Activated CD4-positive, alpha-beta T cell treated with anti-CD3 and anti-CD28 coated beads for 36 hours (primary cell): ENCODE measurements at regions of chr11 and their contacts with region 1.

Region 1: DNA sequence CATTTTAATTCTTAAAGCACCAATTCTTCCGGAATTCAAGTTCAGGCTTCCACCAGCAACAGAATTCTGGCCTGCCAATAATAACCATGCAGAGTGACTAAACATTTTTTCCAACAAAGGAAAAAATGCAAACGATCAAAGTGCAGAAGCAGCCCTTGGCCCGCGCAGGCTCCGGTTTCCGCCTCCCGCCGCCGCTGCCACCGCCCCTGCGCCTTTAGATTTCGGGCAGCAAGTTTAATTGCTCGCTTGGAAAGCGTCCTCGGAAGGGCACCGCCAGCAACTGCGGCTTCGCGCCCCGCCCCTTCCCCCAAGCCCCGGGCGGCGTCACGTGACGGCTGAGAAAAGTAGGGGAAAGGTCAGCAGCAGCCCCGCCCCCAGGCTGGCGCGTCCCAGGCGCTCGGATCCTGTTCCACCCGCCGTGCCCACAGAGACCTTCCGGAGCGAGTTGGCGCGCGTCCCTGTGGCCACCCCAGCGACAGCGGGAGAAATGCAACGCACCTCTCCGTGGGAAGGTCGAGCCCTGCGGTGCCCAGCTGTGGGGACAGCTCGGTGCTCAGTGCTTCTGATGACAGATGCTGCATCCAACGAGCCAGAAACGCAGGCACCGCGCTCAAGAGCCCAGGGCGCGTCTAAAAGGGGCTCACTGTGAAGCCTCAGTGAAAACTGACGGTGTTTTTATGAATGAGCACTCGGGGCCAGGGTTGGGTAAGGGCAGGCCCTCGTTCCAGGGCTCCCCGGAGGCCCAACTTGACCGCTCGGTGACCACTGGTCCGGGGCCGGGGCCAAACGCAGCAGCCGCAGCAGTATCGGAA is 2.5 kb downstream of the CPT1A start:
- DNase-seq: peak; percentile 97
- ATAC-seq: peak; percentile 57
- H3K4me3 Mint-ChIP-seq: peak overlapping the region; percentile 81
- H3K27ac Mint-ChIP-seq: peak overlapping the region; percentile 86
- H3K4me1 Mint-ChIP-seq: peaks cover 50% of the 10 kb centered on the region
- H3K27me3 Mint-ChIP-seq: no peaks in the 10 kb centered on the region

Region 2: DNA sequence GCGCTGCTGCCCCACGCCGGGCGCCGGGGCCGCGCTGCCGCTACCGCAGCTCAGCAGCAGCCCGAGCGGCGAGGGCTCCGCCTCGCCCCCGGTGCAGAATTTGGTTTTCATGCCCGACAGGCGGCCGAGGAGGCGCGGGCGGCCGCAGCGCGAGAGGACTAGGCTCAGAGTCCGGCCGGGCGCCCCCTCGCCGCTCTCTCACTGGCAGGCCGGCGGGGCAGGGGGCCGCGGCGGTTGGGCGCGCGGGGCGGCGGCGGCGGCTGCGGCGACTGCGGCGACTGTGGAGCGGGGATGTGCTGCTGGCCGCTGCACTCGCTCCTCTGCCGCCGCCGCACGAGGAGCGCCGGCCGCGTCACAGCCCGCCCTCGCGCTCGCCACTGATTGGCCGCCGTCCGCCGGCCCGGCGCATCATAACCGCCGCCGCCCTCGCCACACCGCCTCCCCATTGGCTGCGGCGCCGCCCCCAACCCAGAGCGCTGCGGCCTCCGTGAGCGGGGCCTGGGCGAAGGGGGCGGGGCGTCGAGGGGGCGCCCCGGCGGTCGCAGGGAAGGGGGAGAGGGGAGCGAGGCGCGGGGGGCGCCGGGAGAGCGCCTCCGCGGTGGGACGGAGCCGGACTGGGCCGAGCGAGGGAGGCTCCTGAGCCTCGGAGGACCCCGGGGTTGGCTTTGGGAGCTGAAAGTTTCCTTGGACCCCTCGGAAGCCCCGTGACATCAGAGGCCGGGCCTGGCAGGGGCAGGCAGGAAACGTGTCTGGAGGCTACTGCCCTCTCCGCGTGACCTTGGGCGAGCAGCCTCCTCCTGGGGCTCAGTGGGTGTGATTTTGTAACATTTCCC is 718.0 kb before region 1 on chr11 and contains the start of gene CHKA:
- CTCF ChIA-PET with region 1: no interaction called
- POLR2A ChIA-PET with region 1: no interaction called
- intact Hi-C with region 1: loop called in 1 of 2 experiments (anchors 5 kb)
- DNase-seq: peak; percentile 94
- ATAC-seq: peak; percentile 97
- H3K4me3 Mint-ChIP-seq: peak within 1 kb of the TSS; percentile 71
- H3K27ac Mint-ChIP-seq: peak within 1 kb of the TSS; percentile 68
- H3K4me1 Mint-ChIP-seq: peaks cover 7% of the 10 kb centered on the region
- H3K27me3 Mint-ChIP-seq: no peaks in the 10 kb centered on the region
- total RNA-seq, gene CHKA: 5.5 to 7.5 TPM

Region 3: DNA sequence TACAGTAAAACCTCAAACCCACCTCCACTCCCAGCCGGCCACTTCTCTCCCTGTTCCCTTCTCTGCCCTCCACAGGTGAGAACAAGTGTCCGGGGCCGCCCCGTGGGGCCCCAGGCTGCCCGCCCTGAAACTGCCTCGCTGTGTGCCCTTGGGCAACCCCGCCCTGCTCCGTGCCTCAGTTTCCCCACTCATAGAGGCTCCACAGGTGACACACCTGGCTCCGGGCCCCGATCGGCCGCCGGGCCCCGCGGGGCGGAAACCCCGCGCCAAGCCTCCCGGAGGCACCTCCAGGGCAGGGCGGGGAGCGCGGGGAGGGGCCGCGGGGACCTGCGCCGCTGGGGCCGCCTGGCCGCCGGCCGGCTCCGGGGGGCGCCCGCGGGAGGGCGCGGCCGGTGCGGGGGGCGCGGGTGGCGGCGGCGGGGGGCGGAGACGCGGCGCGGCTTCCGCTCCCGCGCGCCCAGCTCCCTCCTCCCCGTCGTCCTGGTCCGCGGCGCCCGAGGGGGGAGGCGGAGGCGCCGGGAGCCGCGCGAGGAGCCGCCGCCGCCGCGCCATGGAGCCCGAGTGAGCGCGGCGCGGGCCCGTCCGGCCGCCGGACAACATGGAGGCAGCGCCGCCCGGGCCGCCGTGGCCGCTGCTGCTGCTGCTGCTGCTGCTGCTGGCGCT is 527.0 kb before region 1 on chr11 and contains the start of gene LRP5:
- CTCF ChIA-PET with region 1: no interaction called
- POLR2A ChIA-PET with region 1: no interaction called
- intact Hi-C with region 1: loop called in 1 of 2 experiments (anchors 2 kb)
- DNase-seq: peak; percentile 33
- ATAC-seq: peak; percentile 60
- H3K4me3 Mint-ChIP-seq: peak within 1 kb of the TSS; percentile 84
- H3K27ac Mint-ChIP-seq: peak within 1 kb of the TSS; percentile 83
- H3K4me1 Mint-ChIP-seq: peaks cover 21% of the 10 kb centered on the region
- H3K27me3 Mint-ChIP-seq: peaks cover 3% of the 10 kb centered on the region
- total RNA-seq, gene LRP5: 11.7 to 13.6 TPM

Region 4: GRCh38 chr11:68735125-68735524 is 104.1 kb before region 1 on chr11:
- CTCF ChIA-PET with region 1: no interaction called
- POLR2A ChIA-PET with region 1: no interaction called
- intact Hi-C with region 1: no loop called
- DNase-seq: no peak
- ATAC-seq: no peak
- H3K4me3 Mint-ChIP-seq: no peak overlapping the region
- H3K27ac Mint-ChIP-seq: no peak overlapping the region
- H3K4me1 Mint-ChIP-seq: no peaks in the 10 kb centered on the region
- H3K27me3 Mint-ChIP-seq: no peaks in the 10 kb centered on the region

Region 5: GRCh38 chr11:68903288-68904247 is 64.3 kb after region 1 on chr11 and contains the starts of genes IGHMBP2 and MRPL21:
- CTCF ChIA-PET with region 1: interaction called, 4 read pairs
- POLR2A ChIA-PET with region 1: no interaction called
- intact Hi-C with region 1: loop called (anchors 1 to 2 kb)
- DNase-seq: peak; percentile 93
- ATAC-seq: peak; percentile 94
- H3K4me3 Mint-ChIP-seq: peak within 1 kb of the TSS; percentile 93
- H3K27ac Mint-ChIP-seq: peak within 1 kb of the TSS; percentile 91
- H3K4me1 Mint-ChIP-seq: peaks cover 29% of the 10 kb centered on the region
- H3K27me3 Mint-ChIP-seq: no peaks in the 10 kb centered on the region
- total RNA-seq, gene IGHMBP2: 20.9 to 25.4 TPM
- total RNA-seq, gene MRPL21: 100 to 102 TPM

Region 6: GRCh38 chr11:69546735-69547370 is 707.6 kb after region 1 on chr11:
- CTCF ChIA-PET with region 1: no interaction called
- POLR2A ChIA-PET with region 1: no interaction called
- intact Hi-C with region 1: loop called in 1 of 2 experiments (anchors 1 kb)
- DNase-seq: peak; percentile 84
- ATAC-seq: peak; percentile 90
- H3K4me3 Mint-ChIP-seq: no peak overlapping the region
- H3K27ac Mint-ChIP-seq: peak overlapping the region; percentile 40
- H3K4me1 Mint-ChIP-seq: peaks cover 27% of the 10 kb centered on the region
- H3K27me3 Mint-ChIP-seq: peaks cover 45% of the 10 kb centered on the region

Region 7: DNA sequence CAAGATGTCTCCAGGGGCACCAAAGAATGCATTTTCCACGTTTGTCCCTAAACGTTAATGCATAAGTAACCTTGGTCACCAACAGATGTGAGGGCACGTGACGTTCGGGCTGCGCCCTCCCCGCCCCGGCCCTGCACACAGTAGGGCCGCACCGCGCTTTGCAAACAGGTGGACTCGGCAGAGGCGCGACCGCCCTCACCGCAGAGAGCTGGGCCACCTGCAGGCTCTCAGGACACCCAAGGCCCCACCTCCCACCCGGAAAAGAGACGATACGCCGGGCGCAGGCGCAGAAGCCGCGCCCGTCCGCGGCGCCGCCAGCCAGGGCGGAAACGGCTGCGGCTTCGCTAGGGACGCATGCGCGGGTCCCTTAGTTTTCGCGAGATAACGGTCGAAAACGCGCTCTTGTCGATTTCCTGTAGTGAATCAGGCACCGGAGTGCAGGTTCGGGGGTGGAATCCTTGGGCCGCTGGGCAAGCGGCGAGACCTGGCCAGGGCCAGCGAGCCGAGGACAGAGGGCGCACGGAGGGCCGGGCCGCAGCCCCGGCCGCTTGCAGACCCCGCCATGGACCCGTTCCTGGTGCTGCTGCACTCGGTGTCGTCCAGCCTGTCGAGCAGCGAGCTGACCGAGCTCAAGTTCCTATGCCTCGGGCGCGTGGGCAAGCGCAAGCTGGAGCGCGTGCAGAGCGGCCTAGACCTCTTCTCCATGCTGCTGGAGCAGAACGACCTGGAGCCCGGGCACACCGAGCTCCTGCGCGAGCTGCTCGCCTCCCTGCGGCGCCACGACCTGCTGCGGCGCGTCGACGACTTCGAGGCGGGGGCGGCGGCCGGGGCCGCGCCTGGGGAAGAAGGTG is 1363.9 kb after region 1 on chr11 and contains the start of gene FADD:
- CTCF ChIA-PET with region 1: no interaction called
- POLR2A ChIA-PET with region 1: no interaction called
- intact Hi-C with region 1: loop called in 1 of 2 experiments (anchors 5 kb)
- DNase-seq: peak; percentile 95
- ATAC-seq: peak; percentile 68
- H3K4me3 Mint-ChIP-seq: peak within 1 kb of the TSS; percentile 97
- H3K27ac Mint-ChIP-seq: peak within 1 kb of the TSS; percentile 99
- H3K4me1 Mint-ChIP-seq: peaks cover 41% of the 10 kb centered on the region
- H3K27me3 Mint-ChIP-seq: peaks cover 2% of the 10 kb centered on the region
- total RNA-seq, gene FADD: 23.5 to 32.4 TPM